Prostate gland (tissue), 2 donors: ENCODE measurements at regions of chr6 and their contacts with region 1.

Region 1: DNA sequence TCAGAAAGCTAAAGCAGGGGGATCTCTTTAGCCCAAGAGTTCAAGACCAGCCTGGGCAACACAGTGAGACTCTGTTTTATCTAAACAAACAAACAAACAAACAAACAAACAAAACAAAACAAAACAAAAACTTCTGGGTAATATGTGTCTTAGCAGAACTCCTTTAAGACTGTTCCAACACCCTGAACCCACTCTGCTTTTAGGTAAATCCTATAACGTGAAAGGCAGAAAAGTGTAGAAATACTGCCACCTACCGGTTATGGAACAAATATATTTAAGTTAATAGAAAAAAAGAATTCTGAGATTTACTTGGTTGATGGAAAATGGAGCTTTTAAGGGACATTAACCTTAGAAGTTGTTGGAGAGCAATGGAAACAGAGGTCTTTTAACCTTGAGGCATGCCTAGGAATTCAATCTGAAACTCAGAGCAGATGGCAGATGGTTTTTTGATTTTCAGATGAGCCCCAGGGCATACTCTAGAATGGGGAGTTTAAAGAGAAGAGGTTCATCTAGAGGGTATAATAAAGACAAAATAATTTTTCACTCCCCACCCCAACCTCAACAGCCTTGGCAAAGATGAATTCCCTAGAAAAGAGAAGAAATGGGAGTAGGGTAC is 38.5 kb downstream of the SOD2 start:
- DNase-seq: no peak
- H3K4me3 ChIP-seq: no peak overlapping the region
- H3K27ac ChIP-seq: no peak overlapping the region
- H3K4me1 ChIP-seq: no peaks in the 10 kb centered on the region
- H3K27me3 ChIP-seq: no peaks in the 10 kb centered on the region
- CTCF ChIP-seq: peak; percentile 43 to 66 (median 53)
- POLR2A ChIP-seq: no peak

Region 2: DNA sequence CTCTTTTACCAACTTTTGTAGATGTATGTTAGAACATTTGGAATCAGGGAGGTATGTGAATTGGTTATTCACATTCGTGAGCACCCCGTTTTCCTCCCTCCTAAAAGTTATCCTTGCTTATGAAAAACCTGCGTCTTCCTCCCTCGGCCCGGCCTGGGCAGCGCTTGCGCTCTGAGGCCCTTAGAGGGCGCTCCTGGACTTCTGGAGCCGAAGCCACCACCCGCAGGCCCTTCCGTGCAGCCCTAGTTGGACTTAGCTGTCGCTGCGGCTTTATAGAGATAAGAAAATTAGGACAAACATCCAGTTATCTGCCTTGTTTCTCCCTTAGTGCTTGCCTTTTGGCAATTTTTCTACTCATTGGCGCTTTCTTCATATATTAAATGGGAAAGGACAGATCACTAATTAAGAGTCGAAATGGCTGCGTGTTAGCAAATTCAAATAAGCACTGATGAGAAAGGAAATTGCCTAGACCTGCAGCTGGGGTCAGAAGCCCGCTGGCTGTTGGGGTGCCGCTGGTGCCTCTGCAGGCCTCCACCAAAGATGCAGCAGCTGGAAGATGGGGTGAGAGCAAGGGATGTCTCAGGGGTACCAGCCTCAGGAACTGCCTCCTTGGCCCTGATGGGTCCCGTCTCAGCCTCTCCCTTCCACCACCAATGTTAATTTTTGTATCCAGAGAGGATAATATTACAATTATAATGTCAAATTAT is 480.2 kb before region 1 on chr6:
- intact Hi-C with region 1: loop called (anchors 2 kb)
- DNase-seq: peak; percentile 17
- H3K4me3 ChIP-seq: no peak overlapping the region
- H3K27ac ChIP-seq: no peak overlapping the region
- H3K4me1 ChIP-seq: no peaks in the 10 kb centered on the region
- H3K27me3 ChIP-seq: peaks cover 22% of the 10 kb centered on the region
- CTCF ChIP-seq: peak; percentile 28 to 53 (median 44)
- POLR2A ChIP-seq: no peak

Region 3: DNA sequence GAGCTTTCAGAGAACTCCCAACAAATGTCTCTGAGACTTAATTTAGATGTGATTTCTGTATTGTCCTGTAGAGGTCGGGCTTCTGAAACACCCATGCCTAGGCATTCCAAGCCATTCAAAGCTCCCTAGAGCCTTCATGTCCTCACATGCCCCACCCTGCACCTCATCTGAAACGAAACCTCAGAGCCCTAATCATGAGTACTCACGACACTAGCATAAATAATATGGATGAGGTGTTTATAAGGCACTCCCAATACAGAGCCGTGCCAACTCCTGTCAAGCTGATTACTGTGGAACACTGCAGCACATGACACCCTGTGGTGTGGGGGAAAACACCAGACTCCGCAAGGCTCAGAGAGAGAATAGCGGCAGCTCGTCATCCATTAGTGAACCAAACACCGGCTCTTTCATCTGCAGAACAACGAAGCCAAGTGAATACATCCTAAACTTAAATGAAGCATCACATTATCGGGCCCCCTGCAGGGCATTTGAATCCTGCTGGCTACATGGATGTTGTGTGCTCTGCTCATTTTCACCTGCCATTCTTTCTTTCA is 401.6 kb before region 1 on chr6:
- intact Hi-C with region 1: loop called (anchors 10 kb)
- DNase-seq: peak; percentile 17
- H3K4me3 ChIP-seq: no peak overlapping the region
- H3K27ac ChIP-seq: no peak overlapping the region
- H3K4me1 ChIP-seq: no peaks in the 10 kb centered on the region
- H3K27me3 ChIP-seq: no peaks in the 10 kb centered on the region
- CTCF ChIP-seq: peak in 3 of 4 experiments; percentile 0 to 57 (median 37)
- POLR2A ChIP-seq: no peak